ENCODE measurements at regions of chr12 and their contacts with region 1.

Region 1: GRCh38 chr12:31215518-31216232 is 110.3 kb downstream of the SINHCAF start:
- DNase-seq: no peak
- H3K4me3 ChIP-seq: no peak overlapping the region
- H3K27ac ChIP-seq: no peak overlapping the region
- H3K4me1 ChIP-seq: peaks cover 3 to 16% (median 8%) of the 10 kb centered on the region in 4 experiments
- H3K27me3 ChIP-seq: peaks cover 0 to 4% (median 1%) of the 10 kb centered on the region in 4 experiments; a peak in 1 of 7 replicates
- CTCF ChIP-seq: peak in 1 of 3 experiments; percentile 7; a peak in 1 of 4 replicates
- EP300 ChIP-seq: no peak
- POLR2A ChIP-seq: no peak
- RAD21 ChIP-seq: peak in 1 of 2 experiments; percentile 8; a peak in 2 of 4 replicates

Region 2: DNA sequence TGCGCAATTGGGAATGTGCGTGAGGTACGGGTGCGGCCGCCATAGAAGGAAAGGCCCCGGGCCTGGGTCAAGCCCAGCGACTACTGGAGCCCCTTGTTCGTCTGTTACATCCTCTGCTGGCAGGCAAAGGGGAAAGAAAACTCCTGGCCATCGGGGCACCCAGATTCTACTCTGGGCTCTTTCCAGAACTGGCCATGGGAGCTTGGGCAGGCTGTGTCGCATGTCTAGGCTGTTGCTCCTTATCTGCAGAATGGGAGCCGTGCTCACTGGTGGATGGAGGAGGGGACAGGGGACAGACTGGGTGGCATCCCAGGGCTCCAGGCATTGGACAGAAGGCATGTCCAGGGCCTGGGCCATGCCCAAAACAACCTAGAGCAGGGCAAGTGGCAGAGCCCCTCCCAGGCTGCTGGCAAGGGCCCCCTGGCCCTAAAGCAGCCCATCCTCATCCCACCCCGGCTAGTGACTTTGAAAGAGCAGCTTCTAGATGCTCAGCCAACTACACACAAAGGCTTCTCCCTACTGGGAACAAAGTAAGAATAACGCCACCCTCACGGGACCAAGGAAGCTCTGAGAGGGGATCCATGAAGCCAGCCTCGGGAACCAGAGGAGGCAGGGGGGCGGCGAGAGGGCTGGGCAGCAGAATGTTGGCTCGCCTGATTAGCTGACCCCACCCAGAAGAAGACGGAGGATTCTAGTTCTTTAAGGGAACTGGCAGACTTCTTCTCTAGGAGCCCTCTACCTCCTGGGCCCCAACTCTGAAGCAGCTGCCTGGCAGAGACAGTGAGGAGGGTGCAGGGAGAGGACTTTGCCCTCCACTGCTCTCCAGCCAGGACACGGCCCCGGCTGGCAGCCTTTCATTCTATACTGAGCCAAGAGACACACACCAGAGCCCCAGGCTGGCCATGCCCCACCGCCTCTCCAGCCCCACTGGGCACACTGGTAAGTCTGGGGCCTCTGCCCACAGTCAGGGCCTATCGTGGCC is 13.4 kb after region 1 on chr12:
- CTCF ChIA-PET with region 1: interaction called, 231 read pairs
- POLR2A ChIA-PET with region 1: interaction called, 3 read pairs
- DNase-seq: no peak
- H3K4me3 ChIP-seq: no peak overlapping the region
- H3K27ac ChIP-seq: no peak overlapping the region
- H3K4me1 ChIP-seq: peaks cover 2 to 10% (median 7%) of the 10 kb centered on the region in 4 experiments
- H3K27me3 ChIP-seq: peaks cover 0 to 6% (median 3%) of the 10 kb centered on the region in 4 experiments; a peak in 4 of 7 replicates
- CTCF ChIP-seq: no peak
- EP300 ChIP-seq: no peak
- POLR2A ChIP-seq: no peak
- RAD21 ChIP-seq: no peak

Measured in H1 (cell line).